PC-3 (cell line): ENCODE measurements at regions of chr4 and their contacts with region 1.

Region 1: GRCh38 chr4:78864405-78865024 is 74.7 kb downstream of the PAQR3 start:
- DNase-seq: peak; percentile 78
- ATAC-seq: 0 out of 2 replicates have a peak, but pooled peaks have one; percentile 31
- H3K4me3 ChIP-seq: no peak overlapping the region
- H3K27ac ChIP-seq: no peak overlapping the region
- H3K4me1 ChIP-seq: no peaks in the 10 kb centered on the region
- H3K27me3 ChIP-seq: no peaks in the 10 kb centered on the region
- CTCF ChIP-seq: peak; percentile 68

Region 2: GRCh38 chr4:78612398-78613178 is 251.9 kb before region 1 on chr4:
- CTCF ChIA-PET with region 1: no interaction called
- POLR2A ChIA-PET with region 1: no interaction called
- intact Hi-C with region 1: loop called (anchors 1 kb)
- DNase-seq: peak; percentile 54
- ATAC-seq: peak; percentile 57
- H3K4me3 ChIP-seq: no peak overlapping the region
- H3K27ac ChIP-seq: no peak overlapping the region
- H3K4me1 ChIP-seq: no peaks in the 10 kb centered on the region
- H3K27me3 ChIP-seq: no peaks in the 10 kb centered on the region
- CTCF ChIP-seq: peak; percentile 72

Region 3: DNA sequence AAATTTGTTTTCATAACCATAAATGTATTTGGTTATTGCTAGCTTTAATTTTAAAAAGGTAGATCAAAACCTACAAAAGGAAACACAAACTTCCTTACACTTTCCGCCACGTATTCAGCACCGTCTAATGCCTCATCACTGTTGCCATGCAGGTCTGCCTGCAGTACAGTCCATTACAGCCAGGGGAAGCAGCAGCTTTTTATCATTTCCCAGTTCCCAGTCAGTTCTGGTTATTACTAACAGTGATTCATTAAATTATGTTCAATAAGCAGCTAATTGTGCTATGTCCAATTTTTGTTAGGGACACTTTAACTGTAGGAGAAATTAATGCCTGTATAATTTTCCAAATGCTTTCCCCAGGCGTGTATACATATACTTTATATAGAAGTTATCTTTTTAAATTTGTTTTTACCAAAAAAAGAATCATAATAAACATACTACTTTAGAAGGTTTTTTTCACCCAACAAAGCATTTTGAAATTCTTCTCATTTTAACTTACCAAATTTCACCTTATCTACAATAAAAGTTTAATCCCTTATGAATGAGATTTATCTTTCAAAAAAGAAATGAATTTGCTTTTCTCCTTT is 219.7 kb before region 1 on chr4:
- CTCF ChIA-PET with region 1: no interaction called
- POLR2A ChIA-PET with region 1: no interaction called
- intact Hi-C with region 1: loop called (anchors 1 kb)
- DNase-seq: peak; percentile 76
- ATAC-seq: peak; percentile 62
- H3K4me3 ChIP-seq: peak overlapping the region; percentile 60
- H3K27ac ChIP-seq: peak overlapping the region; percentile 93
- H3K4me1 ChIP-seq: peaks cover 42% of the 10 kb centered on the region
- H3K27me3 ChIP-seq: no peaks in the 10 kb centered on the region
- CTCF ChIP-seq: peak; percentile 68